ENCODE measurements at regions of chr4 and their contacts with region 1.

Region 1: DNA sequence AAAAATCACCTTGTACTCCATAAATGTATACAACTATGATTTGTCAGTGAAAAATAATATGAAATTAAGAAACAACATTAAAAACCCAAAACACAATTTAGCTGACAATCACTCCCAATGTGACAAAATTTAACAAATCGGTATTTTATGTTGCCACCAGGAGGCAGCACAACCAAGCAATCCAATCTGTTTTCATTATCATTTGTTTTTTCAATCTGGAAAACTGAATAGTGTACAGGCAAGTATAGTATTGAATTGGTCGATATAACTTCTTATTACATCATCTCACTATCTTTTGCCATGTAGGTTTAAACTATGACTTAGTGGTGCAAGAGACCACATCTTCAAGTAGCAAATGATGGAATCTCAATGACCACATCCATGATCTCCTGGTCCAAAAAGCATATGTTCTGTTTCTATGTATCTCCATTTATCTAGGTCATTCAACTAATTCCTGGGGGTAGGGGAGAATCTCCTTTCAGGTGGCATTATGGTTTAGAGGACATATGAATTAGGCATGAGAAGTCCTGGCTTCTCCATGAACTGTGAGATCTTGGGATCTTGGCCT is 112.9 kb upstream of the AGA start:
- DNase-seq: peak; percentile 51
- ATAC-seq: no peak
- H3K4me3 ChIP-seq: no peak overlapping the region
- H3K27ac ChIP-seq: no peak overlapping the region
- H3K4me1 ChIP-seq: no peaks in the 10 kb centered on the region
- H3K27me3 ChIP-seq: no peaks in the 10 kb centered on the region
- CTCF ChIP-seq: peak; percentile 78

Region 2: DNA sequence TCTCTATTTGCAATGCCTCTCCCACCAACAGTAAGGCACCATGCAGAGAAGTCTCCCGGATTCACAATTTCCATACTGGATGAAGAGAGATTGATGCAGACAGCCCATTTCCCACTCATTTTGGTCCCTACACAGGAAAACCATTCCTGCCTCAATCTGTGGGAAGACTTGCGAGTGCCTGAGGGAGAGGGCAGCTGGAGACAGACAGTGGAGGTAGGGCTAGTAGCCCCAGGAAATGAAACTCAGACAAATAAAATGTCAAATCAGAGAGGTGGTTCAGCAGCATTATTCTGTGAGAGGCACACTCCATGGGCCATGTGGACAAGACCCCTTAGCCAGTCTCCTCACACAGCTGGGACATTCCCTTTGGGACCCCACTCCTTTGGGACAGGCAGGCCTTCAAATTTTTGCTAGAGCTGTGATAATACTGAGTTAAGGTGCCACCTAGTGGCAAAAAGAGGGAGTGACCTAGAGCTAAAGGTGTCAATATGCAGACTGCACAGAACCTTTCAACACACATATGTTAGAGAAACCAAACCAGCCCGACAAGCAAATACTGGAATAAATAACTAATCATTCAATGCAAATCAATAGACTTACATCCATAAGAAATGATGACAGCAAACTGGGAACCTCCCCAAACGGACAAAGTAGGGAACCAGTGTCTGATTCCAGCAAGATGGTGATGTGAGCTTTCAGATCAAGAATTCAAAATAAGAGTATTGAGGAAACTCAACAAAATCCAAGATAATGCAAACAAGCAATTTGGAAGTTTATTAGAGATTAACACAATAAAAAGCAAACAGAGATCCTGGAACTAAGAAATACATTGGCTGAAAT is 1752.4 kb after region 1 on chr4:
- CTCF ChIA-PET with region 1: no interaction called
- POLR2A ChIA-PET with region 1: no interaction called
- intact Hi-C with region 1: loop called (anchors 5 kb)
- DNase-seq: peak; percentile 60
- ATAC-seq: no peak
- H3K4me3 ChIP-seq: no peak overlapping the region
- H3K27ac ChIP-seq: no peak overlapping the region
- H3K4me1 ChIP-seq: no peaks in the 10 kb centered on the region
- H3K27me3 ChIP-seq: no peaks in the 10 kb centered on the region
- CTCF ChIP-seq: peak; percentile 79